ENCODE measurements at regions of chr11 and their contacts with region 1.

Region 1: DNA sequence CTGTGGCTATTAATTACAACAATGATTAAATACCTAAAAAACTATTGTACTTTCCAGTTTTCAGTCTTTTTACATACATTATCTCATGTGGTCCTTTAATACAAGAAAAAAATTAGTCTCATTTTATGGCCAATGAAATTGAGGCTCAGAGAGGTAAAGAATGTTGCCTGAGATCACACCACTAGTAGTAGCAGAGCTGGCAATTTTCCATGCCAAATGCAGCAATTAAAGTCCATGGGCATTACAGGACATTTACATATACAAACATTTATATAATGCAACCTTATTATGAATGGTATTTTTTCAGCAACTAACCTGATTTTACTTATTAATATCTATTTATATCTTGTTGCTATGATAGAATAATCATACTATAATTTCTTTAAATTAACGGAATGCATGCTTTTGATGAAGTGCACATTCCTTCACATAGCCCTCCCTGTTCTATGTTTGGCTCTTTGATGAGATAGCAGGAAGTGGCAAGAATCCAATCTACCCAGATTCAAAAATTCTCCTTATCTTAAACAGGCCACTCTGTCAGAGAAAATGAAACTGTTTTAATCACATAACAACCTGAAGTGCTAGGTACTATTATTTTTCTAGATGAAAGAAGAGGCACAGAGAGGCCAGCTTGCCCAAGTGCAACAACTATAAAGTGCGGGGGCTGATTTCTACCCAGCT is 120.9 kb upstream of the LDLRAD3 start:
- DNase-seq: peak; percentile 11
- ATAC-seq: no peak
- H3K4me3 ChIP-seq: no peak overlapping the region
- H3K27ac ChIP-seq: no peak overlapping the region
- H3K4me1 ChIP-seq: peaks cover 12% of the 10 kb centered on the region
- H3K27me3 ChIP-seq: no peaks in the 10 kb centered on the region
- CTCF ChIP-seq: no peak

Region 2: GRCh38 chr11:35927730-35928129 is 104.8 kb after region 1 on chr11:
- CTCF ChIA-PET with region 1: interaction called, 15 read pairs
- POLR2A ChIA-PET with region 1: no interaction called
- intact Hi-C with region 1: no loop called
- DNase-seq: peak; percentile 97
- ATAC-seq: peak; percentile 95
- H3K4me3 ChIP-seq: peak overlapping the region; percentile 59
- H3K27ac ChIP-seq: peak overlapping the region; percentile 73
- H3K4me1 ChIP-seq: peaks cover 25% of the 10 kb centered on the region
- H3K27me3 ChIP-seq: no peaks in the 10 kb centered on the region
- CTCF ChIP-seq: no peak

Region 3: GRCh38 chr11:36009473-36009872 is 186.5 kb after region 1 on chr11:
- CTCF ChIA-PET with region 1: interaction called, 15 read pairs
- POLR2A ChIA-PET with region 1: no interaction called
- intact Hi-C with region 1: no loop called
- DNase-seq: peak; percentile 69
- ATAC-seq: peak; percentile 29
- H3K4me3 ChIP-seq: peak overlapping the region; percentile 47
- H3K27ac ChIP-seq: peak overlapping the region; percentile 68
- H3K4me1 ChIP-seq: peaks cover 66% of the 10 kb centered on the region
- H3K27me3 ChIP-seq: no peaks in the 10 kb centered on the region
- CTCF ChIP-seq: no peak

Region 4: DNA sequence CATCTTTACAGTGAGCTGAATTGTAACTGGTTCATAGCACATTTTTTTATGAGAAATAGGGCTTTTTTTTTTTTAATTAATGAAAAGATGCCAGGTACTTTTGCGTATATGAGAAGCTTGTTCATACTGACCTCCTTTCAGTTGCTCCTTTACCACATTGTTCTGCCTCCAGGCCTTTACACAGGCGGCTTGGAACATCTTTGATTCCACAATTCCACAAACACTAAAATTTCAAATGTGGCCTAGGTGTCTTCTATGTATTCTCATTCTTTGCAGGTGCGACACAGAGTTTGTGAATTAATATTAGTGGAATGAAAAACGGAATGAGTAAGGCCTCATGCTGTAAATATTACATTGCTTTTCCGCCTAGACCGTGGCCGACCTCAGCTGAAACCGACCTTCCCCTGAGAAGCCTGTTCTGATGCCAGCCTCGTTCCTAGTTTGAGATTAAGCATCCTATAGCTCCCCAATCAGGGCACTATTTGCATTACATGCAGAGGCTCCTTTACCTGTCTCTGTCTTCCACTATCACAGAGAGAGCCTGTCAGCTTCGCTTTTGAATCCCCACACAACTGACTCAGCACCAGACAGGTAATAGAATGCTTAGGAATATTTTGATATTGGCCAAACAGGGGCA is 246.7 kb after region 1 on chr11:
- CTCF ChIA-PET with region 1: interaction called, 12 read pairs
- POLR2A ChIA-PET with region 1: interaction called, 3 read pairs
- intact Hi-C with region 1: no loop called
- DNase-seq: peak; percentile 28
- ATAC-seq: no peak
- H3K4me3 ChIP-seq: no peak overlapping the region
- H3K27ac ChIP-seq: no peak overlapping the region
- H3K4me1 ChIP-seq: no peaks in the 10 kb centered on the region
- H3K27me3 ChIP-seq: no peaks in the 10 kb centered on the region
- CTCF ChIP-seq: peak; percentile 43; the same call in 1 of the 2 replicates

Region 5: GRCh38 chr11:36258730-36259360 is 435.9 kb after region 1 on chr11:
- CTCF ChIA-PET with region 1: interaction called, 27 read pairs
- POLR2A ChIA-PET with region 1: no interaction called
- intact Hi-C with region 1: loop called (anchors 2 kb)
- DNase-seq: peak; percentile 74
- ATAC-seq: peak; percentile 73
- H3K4me3 ChIP-seq: no peak overlapping the region
- H3K27ac ChIP-seq: no peak overlapping the region
- H3K4me1 ChIP-seq: peaks cover 18% of the 10 kb centered on the region
- H3K27me3 ChIP-seq: no peaks in the 10 kb centered on the region
- CTCF ChIP-seq: peak; percentile 77

Measured in PC-3 (cell line).